Heart left ventricle (tissue), 16 donors: ENCODE measurements at regions of chr10 and their contacts with region 1.

Region 1: GRCh38 chr10:95391581-95392216 is 100.9 kb upstream of the PDLIM1 start:
- DNase-seq: no peak
- ATAC-seq: peak in 2 of 4 donors; percentile 17 to 25
- H3K4me3 ChIP-seq: no peak overlapping the region
- H3K27ac ChIP-seq: peak overlapping the region in 11 of 12 donors; percentile 24 to 98 (median 50)
- H3K4me1 ChIP-seq: peaks cover 4 to 95% (median 74%) of the 10 kb centered on the region in 12 donors
- H3K27me3 ChIP-seq: no peaks in the 10 kb centered on the region
- CTCF ChIP-seq: peak in 1 of 12 donors; percentile 23
- POLR2A ChIP-seq: no peak

Region 2: GRCh38 chr10:95408983-95409873 is 17.5 kb after region 1 on chr10:
- intact Hi-C with region 1: loop called in 1 of 10 experiments (anchors 2 kb)
- DNase-seq: no peak
- ATAC-seq: no peak
- H3K4me3 ChIP-seq: peak overlapping the region in 2 of 12 donors; percentile 19
- H3K27ac ChIP-seq: peak overlapping the region; percentile 63 to 98 (median 90)
- H3K4me1 ChIP-seq: peaks cover 20 to 90% (median 62%) of the 10 kb centered on the region in 12 donors
- H3K27me3 ChIP-seq: no peaks in the 10 kb centered on the region
- CTCF ChIP-seq: no peak
- POLR2A ChIP-seq: no peak

Region 3: DNA sequence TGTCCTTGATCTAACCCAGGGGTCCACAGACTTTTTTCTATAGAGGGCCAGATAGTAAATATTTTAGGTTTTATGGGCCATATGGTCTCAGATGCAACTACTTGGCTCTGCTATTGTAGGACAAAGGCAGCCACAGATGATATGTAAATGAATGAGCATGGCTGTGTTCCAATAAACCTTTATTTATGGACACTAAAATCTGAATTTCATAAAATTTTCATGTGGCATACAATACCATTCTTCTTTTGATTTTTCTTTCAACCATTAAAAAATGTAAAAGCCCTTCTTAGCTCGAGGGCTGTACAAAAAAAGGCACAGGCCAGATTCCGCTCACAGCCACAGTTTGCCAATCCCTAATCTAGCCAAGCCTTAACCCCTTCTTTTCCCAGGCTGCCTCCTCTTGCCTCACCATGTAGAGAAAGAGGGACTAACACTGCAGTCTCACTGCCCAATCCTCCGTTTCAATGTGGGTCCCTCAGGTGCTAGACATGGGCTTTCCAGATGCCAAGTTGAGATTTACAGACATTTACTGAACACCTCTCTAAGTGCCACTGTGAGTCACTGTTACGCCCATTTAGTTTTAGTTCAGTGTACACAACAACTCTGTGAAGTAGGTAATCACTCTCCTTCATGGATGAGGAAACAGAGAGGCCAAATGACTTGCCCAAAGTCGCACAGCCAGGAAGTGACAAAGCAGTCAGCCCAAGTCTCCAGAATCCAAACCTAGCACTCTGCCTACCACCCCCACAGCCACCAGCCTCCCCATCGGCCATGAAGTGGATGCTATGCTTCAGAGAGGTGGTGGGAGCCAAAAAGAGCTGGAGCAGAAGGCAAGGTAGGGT is 31.7 kb after region 1 on chr10:
- intact Hi-C with region 1: loop called in 1 of 10 experiments (anchors 5 kb)
- DNase-seq: no peak
- ATAC-seq: peak in 3 of 4 donors; percentile 25 to 39 (median 30)
- H3K4me3 ChIP-seq: no peak overlapping the region
- H3K27ac ChIP-seq: peak overlapping the region; percentile 6 to 98 (median 61)
- H3K4me1 ChIP-seq: peaks cover 0 to 79% (median 46%) of the 10 kb centered on the region in 12 donors
- H3K27me3 ChIP-seq: no peaks in the 10 kb centered on the region
- CTCF ChIP-seq: no peak
- POLR2A ChIP-seq: no peak